GM18951 (cell line): ENCODE measurements at regions of chr3 and their contacts with region 1.

Region 1: GRCh38 chr3:128497387-128498126 is 4.6 kb upstream of the GATA2 start:
- POLR2A ChIP-seq: no peak

Region 2: GRCh38 chr3:128438488-128439072 is 59.0 kb before region 1 on chr3:
- in situ Hi-C with region 1: loop called (anchors 10 kb)
- POLR2A ChIP-seq: no peak